ENCODE measurements at regions of chr21 and their contacts with region 1.

Region 1: GRCh38 chr21:29114765-29115164 is 15.7 kb upstream of the MAP3K7CL start:
- H3K4me3 ChIP-seq: no peak overlapping the region
- H3K27ac ChIP-seq: no peak overlapping the region
- H3K4me1 ChIP-seq: peaks cover 10% of the 10 kb centered on the region
- CTCF ChIP-seq: no peak

Region 2: DNA sequence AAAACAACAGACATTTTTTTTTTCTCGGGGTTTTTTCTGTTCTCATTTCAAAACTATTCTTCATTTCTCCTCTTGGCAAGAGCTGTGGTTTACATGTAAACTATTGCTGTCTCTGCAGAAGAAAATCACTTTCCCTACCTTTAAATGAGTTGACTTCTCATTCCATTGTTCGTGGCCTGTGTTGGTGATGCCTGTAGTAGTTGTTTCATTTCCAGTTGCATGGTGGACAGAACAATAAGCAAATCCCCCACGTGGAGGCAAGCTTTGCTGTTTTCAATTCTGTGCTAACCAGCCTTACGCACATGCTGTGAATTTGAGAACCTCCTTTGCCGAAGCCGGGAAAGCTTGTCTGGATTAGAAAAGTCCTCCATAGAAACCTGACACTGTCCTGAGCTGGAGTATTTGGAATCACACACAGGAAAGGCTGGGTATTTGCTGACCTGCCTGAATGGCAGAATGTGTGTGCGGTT is 10.5 kb before region 1 on chr21:
- CTCF ChIA-PET with region 1: interaction called, 15 read pairs
- POLR2A ChIA-PET with region 1: interaction called, 8 read pairs
- H3K4me3 ChIP-seq: no peak overlapping the region
- H3K27ac ChIP-seq: no peak overlapping the region
- H3K4me1 ChIP-seq: peaks cover 1% of the 10 kb centered on the region; the same call in 1 of the 2 replicates
- CTCF ChIP-seq: no peak

Measured in HEK293 (cell line).